Activated T-helper 2 cell treated with anti-CD3 and anti-CD28 coated beads, Interferon-gamma antibody, Interleukin-2, Interleukin-4, amounts not matched to agents 10 μg/mL and 5 μg/mL and 100 μg/mL, durations not matched to agents 14 hours and 24 hours and 36 hours (primary cell): ENCODE measurements at regions of chr14 and their contacts with region 1.

Region 1: GRCh38 chr14:60514741-60515491 is 6.0 kb downstream of the SIX6 start:
- DNase-seq: no peak
- H3K4me3 Mint-ChIP-seq: peak overlapping the region; percentile 13
- H3K27ac Mint-ChIP-seq: no peak overlapping the region
- H3K4me1 Mint-ChIP-seq: peaks cover 8% of the 10 kb centered on the region
- H3K27me3 Mint-ChIP-seq: peaks cover 70% of the 10 kb centered on the region

Region 2: DNA sequence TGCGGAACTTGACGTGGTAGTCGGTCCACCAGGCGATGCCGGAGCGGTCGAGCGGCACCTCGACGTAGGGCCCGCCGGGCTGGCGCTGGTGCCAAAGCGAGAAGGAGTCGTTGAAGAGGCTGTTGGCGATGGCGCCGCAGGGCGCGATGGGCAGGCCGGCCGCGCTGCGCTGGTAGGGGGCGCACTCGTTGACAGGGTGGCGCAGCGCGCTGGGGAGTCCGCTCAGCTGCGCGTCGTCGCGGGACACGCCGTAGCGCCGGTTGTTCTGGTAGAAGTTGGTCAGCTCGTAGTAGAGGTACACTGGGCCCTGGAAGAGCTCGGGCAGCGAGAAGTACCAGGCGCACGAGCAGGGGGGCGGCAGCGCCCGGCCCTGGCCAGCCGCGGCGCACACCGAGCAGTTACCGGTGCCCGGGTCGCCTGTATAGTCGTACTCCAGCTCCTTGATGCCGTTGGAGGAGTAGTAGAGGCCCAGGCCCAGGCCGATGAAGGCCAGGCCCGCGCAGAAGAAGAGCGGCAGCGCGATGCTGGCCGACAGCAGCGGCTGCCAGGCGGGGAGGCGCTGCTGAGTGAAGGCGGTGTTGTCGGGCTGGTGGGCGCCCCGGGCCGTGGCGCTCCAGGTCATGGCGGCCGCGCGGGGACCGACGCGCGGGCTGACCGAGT is 765.7 kb after region 1 on chr14:
- intact Hi-C with region 1: loop called (anchors 10 kb)
- DNase-seq: peak; percentile 65
- H3K4me3 Mint-ChIP-seq: peak overlapping the region; percentile 81
- H3K27ac Mint-ChIP-seq: peak overlapping the region; percentile 59
- H3K4me1 Mint-ChIP-seq: peaks cover 21% of the 10 kb centered on the region
- H3K27me3 Mint-ChIP-seq: peaks cover 42% of the 10 kb centered on the region